ENCODE measurements at regions of chr14 and their contacts with region 1.

Region 1: DNA sequence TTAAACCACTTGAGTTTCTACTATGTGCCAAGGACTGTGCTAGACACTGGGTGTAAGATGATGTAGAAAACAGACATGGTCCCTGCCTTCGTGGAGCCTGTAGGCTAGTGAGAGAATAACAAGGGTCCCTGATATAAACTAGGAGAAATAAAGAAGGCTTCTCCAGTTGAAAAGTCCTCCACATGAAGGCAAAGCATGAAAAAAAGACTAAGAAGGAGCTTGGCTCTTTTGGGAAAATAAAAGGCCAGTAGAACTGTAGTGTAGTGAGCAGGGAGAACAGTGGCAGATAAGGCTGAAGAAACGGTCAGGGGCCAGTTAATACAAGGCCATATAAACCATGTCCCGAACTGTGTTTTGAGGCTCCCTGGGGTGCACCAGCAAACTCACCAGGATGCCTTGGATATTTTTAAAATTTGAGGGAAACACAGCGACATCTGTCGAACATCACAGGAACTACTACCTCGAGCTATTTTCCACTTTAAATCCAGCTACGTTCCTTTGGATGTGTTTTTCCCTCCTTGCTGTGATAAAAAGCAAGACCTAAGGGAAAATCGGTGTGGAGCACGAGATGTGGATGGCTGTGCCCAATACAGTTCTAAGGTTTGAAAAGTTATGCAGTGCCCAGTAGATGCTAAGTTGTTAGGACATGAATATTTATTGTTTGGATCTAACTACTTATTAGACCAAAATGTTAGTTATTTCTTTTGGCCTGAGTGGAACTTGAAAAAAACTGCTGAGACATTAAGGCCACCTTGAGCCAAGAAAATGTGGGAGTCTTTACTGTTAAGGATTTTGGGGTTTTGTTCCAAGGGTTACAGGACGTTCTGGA is 8.5 kb upstream of the CFL2 start:
- DNase-seq: peak in 4 of 5 donors; percentile 43 to 79 (median 60)
- H3K4me3 ChIP-seq: no peak overlapping the region
- H3K27ac ChIP-seq: no peak overlapping the region
- H3K4me1 ChIP-seq: no peaks in the 10 kb centered on the region
- H3K27me3 ChIP-seq: no peaks in the 10 kb centered on the region
- CTCF ChIP-seq: peak; percentile 81

Region 2: GRCh38 chr14:34678306-34678705 is 44.6 kb before region 1 on chr14:
- intact Hi-C with region 1: loop called (anchors 5 kb)
- DNase-seq: no peak
- H3K4me3 ChIP-seq: no peak overlapping the region
- H3K27ac ChIP-seq: no peak overlapping the region
- H3K4me1 ChIP-seq: no peaks in the 10 kb centered on the region
- H3K27me3 ChIP-seq: no peaks in the 10 kb centered on the region
- CTCF ChIP-seq: no peak